Activated CD4-positive, alpha-beta T cell treated with anti-CD3 and anti-CD28 coated beads for 36 hours (primary cell): ENCODE measurements at regions of chr9 and their contacts with region 1.

Region 1: GRCh38 chr9:112750111-112750767 is at the start of gene SNX30:
- DNase-seq: peak; percentile 83
- ATAC-seq: peak; percentile 45
- H3K4me3 Mint-ChIP-seq: peak within 1 kb of the TSS; percentile 83
- H3K27ac Mint-ChIP-seq: peak within 1 kb of the TSS; percentile 91
- H3K4me1 Mint-ChIP-seq: peaks cover 63% of the 10 kb centered on the region
- H3K27me3 Mint-ChIP-seq: no peaks in the 10 kb centered on the region
- total RNA-seq, gene SNX30: 4.2 to 4.6 TPM

Region 2: GRCh38 chr9:111483862-111484571 is 1266.2 kb before region 1 on chr9 and contains the start of gene ECPAS:
- CTCF ChIA-PET with region 1: no interaction called
- POLR2A ChIA-PET with region 1: no interaction called
- intact Hi-C with region 1: loop called in 1 of 2 experiments (anchors 2 kb)
- DNase-seq: peak; percentile 83
- ATAC-seq: peak; percentile 79
- H3K4me3 Mint-ChIP-seq: peak within 1 kb of the TSS; percentile 81
- H3K27ac Mint-ChIP-seq: peak within 1 kb of the TSS; percentile 89
- H3K4me1 Mint-ChIP-seq: peaks cover 28% of the 10 kb centered on the region
- H3K27me3 Mint-ChIP-seq: no peaks in the 10 kb centered on the region
- total RNA-seq, gene ECPAS: 78.4 to 127 TPM

Region 3: DNA sequence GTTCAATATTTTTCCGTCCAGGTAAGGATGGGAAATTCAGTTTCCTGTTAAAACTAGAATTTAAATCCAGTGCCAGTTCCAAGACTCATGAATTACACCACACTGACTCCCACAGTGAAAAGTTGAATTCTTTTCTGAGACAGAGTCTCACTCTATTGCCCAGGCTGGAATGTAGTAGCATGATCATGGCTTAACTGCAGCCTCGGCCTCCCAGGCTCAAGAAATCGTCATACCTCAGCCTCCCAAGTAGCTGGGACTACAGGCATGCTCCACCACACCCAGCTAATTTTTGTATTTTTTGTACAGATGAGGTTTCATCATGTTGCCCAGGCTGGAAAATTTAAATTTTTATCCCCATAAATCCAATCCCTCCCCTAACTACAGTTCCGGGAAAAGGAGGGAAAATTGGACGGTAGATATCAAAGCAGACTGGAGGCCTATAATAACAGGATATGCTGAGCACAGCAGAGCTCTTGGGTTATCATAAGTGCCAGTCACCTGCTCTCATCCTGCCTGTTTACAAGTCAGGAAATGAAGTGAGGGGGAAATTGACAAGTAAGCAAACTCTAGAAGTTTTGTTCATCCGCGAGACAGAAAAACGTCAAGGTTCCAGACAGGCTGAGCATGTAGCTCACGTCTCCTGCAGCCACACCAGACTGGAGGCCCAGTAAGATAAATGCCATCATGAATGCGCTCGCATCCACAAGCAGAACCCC is 748.0 kb before region 1 on chr9:
- CTCF ChIA-PET with region 1: no interaction called
- POLR2A ChIA-PET with region 1: no interaction called
- intact Hi-C with region 1: loop called in 1 of 2 experiments (anchors 5 kb)
- DNase-seq: peak; percentile 29
- ATAC-seq: peak; percentile 69
- H3K4me3 Mint-ChIP-seq: no peak overlapping the region
- H3K27ac Mint-ChIP-seq: no peak overlapping the region
- H3K4me1 Mint-ChIP-seq: peaks cover 36% of the 10 kb centered on the region
- H3K27me3 Mint-ChIP-seq: peaks cover 6% of the 10 kb centered on the region

Region 4: GRCh38 chr9:112174218-112174964 is 575.8 kb before region 1 on chr9:
- CTCF ChIA-PET with region 1: no interaction called
- POLR2A ChIA-PET with region 1: no interaction called
- intact Hi-C with region 1: loop called in 1 of 2 experiments (anchors 10 kb)
- DNase-seq: peak; percentile 87
- ATAC-seq: peak; percentile 87
- H3K4me3 Mint-ChIP-seq: peak overlapping the region; percentile 75
- H3K27ac Mint-ChIP-seq: peak overlapping the region; percentile 92
- H3K4me1 Mint-ChIP-seq: peaks cover 38% of the 10 kb centered on the region
- H3K27me3 Mint-ChIP-seq: peaks cover 11% of the 10 kb centered on the region

Region 5: DNA sequence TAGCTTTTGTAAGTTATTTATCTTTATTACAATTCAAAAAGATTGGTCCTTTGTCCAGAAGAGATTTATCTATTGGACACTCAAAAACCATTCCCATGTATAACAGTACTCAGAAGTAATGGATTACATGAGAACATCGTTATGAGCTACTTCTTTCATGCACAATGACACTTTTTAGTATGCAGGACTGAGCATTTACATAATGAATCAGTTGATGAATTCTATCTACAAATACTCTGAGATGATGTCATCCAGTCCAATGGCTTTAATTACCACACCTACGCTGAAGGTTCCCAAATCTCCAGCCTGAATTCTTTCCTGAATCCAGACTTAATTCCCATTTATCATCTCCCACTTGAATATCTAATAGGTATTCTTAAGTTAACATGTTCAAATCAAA is 492.1 kb before region 1 on chr9:
- CTCF ChIA-PET with region 1: no interaction called
- POLR2A ChIA-PET with region 1: no interaction called
- intact Hi-C with region 1: no loop called
- DNase-seq: no peak
- ATAC-seq: no peak
- H3K4me3 Mint-ChIP-seq: no peak overlapping the region
- H3K27ac Mint-ChIP-seq: no peak overlapping the region
- H3K4me1 Mint-ChIP-seq: peaks cover 15% of the 10 kb centered on the region
- H3K27me3 Mint-ChIP-seq: no peaks in the 10 kb centered on the region

Region 6: GRCh38 chr9:112717661-112718341 is 32.4 kb before region 1 on chr9 and contains the start of gene INIP:
- CTCF ChIA-PET with region 1: interaction called, 4 read pairs
- POLR2A ChIA-PET with region 1: no interaction called
- intact Hi-C with region 1: loop called (anchors 1 kb)
- DNase-seq: peak; percentile 99
- ATAC-seq: peak; percentile 93
- H3K4me3 Mint-ChIP-seq: peak within 1 kb of the TSS; percentile 89
- H3K27ac Mint-ChIP-seq: peak within 1 kb of the TSS; percentile 97
- H3K4me1 Mint-ChIP-seq: peaks cover 35% of the 10 kb centered on the region
- H3K27me3 Mint-ChIP-seq: no peaks in the 10 kb centered on the region
- total RNA-seq, gene INIP: 37.3 to 37.7 TPM

Region 7: DNA sequence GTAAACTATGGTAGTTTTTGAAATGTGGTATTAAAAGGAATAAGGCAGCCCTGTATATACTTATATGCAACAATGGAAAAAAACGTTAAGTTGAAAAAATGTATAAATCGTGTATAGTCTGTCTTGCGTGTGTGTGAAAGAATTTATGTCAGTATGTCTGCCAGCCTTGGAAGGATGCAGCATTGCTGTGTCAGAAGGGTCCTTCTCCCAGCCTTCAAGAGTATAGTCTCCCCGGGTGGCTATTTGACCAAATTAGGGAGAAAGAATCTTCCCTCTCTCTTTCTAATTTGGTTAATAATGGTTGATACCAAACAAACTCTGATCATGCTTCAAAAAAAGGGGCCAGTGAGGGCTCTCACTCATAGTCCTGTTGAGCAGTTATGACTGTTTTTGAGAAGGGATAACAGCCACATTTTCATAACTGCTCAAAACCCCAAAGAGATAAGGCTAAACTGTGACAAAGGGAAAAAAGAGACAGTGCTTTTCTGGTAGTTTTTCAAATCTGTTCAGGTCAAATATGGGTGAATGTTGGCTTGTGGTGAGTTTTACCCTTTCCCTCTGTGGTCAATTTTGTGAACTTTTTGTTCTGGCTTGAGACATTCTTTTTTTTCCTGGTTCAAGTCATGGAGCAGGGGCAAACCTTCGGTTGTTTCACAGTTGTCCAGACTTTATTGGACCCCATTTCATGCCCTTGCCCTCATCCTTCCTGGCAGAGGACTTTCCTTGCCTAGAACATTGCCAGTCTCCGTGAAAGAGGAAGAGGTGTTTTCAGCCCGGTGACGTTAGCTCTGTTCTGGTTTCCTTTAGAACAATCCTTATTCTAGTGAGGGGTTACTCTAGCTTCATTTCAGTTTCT is 21.3 kb after region 1 on chr9:
- CTCF ChIA-PET with region 1: no interaction called
- POLR2A ChIA-PET with region 1: no interaction called
- intact Hi-C with region 1: loop called (anchors 2 kb)
- DNase-seq: no peak
- ATAC-seq: peak; percentile 77
- H3K4me3 Mint-ChIP-seq: no peak overlapping the region
- H3K27ac Mint-ChIP-seq: peak overlapping the region; percentile 53
- H3K4me1 Mint-ChIP-seq: peaks cover 36% of the 10 kb centered on the region
- H3K27me3 Mint-ChIP-seq: no peaks in the 10 kb centered on the region

Region 8: GRCh38 chr9:114696814-114697544 is 1946.7 kb after region 1 on chr9:
- CTCF ChIA-PET with region 1: no interaction called
- POLR2A ChIA-PET with region 1: no interaction called
- intact Hi-C with region 1: loop called in 1 of 2 experiments (anchors 5 kb)
- DNase-seq: peak; percentile 86
- ATAC-seq: peak; percentile 49
- H3K4me3 Mint-ChIP-seq: peak overlapping the region; percentile 28
- H3K27ac Mint-ChIP-seq: peak overlapping the region; percentile 89
- H3K4me1 Mint-ChIP-seq: peaks cover 89% of the 10 kb centered on the region
- H3K27me3 Mint-ChIP-seq: no peaks in the 10 kb centered on the region